ENCODE measurements at regions of chr7 and their contacts with region 1.

Region 1: GRCh38 chr7:107879400-107880035 is 11.5 kb upstream of the DLD start:
- DNase-seq: peak; percentile 57
- H3K4me3 Mint-ChIP-seq: no peak overlapping the region
- H3K27ac Mint-ChIP-seq: no peak overlapping the region
- H3K4me1 Mint-ChIP-seq: peaks cover 13% of the 10 kb centered on the region
- H3K27me3 Mint-ChIP-seq: peaks cover 4% of the 10 kb centered on the region

Region 2: DNA sequence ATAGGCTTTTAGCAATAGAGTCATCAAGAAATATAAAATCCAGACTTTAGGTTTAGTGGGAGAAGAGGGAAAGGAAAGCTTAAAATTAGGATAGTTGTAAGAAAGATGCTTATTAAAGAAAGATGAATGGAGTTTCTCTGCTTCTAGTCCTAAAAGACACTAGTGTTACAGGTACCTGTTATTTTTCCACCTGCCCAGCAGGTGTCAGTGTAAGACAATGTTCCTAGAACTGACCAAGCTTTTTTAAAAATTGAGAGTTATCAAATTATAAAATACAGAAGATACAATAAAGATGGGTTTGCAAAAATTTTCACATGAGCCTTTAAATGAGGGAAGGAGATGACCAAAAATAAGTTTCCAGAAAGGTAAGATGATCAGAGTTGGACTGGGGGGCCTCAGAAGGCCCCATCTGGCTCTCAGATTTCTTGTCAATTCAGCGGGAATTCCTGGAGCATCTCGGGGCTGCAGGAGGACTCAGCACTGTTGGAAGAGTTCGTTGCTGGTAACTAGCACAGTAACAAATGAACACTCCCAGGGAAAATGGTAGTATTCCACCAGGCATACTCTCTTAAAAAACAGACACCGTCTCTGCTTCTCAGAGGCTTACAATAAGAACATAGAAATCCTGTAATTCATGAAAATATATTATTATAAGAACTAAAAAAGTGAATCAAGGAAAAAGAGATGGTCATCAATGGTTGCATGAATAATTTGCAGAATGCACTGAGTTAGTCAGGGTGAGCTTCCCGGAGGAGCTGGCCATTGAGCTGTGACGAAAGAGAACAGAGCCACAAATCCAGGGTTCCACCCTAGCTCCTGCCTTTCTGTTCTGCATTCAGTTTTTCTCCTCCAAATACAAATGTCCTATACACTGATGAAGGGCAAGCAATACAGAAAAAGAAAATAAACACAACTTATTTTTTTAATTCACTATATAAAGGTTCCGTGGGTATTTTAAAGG is 1086.2 kb before region 1 on chr7:
- CTCF ChIA-PET with region 1: no interaction called
- intact Hi-C with region 1: loop called (anchors 2 kb)
- DNase-seq: peak; percentile 54
- H3K4me3 Mint-ChIP-seq: no peak overlapping the region
- H3K27ac Mint-ChIP-seq: no peak overlapping the region
- H3K4me1 Mint-ChIP-seq: no peaks in the 10 kb centered on the region
- H3K27me3 Mint-ChIP-seq: no peaks in the 10 kb centered on the region

Region 3: DNA sequence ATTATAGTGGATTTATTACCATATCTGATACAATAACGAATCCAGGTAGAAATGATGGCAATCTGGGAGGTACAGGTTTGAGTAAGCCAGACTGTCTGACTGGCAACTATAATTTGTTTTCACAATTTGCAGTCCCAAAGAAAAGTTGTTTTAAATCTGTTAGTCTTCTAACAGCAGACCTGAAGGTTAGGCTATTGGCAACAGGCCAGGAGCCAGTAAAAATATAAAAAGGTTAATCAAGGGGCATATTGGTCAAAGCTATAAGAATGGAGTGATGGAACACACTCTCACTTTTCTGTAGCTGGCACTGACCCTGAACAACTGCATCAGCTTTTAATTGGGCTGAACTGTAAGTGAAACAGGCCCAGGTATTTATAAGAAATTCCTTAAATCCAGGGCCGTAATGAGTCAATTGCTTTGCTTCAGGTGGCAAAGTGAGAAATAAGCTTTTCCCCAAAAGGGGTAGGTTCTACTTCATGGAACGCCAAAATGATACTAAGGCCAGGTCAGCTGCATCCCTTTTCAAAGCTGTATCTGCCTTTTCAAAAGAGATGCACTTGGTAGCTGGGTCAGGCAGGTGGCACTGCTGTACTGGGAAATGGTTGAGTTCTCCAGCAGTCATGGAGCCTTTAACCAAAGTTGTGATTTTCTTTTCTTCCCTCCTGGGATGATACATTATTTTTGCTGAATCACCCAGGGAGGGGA is 416.6 kb before region 1 on chr7:
- CTCF ChIA-PET with region 1: interaction called, 3 read pairs
- intact Hi-C with region 1: loop called (anchors 1 kb)
- DNase-seq: peak; percentile 64
- H3K4me3 Mint-ChIP-seq: no peak overlapping the region
- H3K27ac Mint-ChIP-seq: no peak overlapping the region
- H3K4me1 Mint-ChIP-seq: no peaks in the 10 kb centered on the region
- H3K27me3 Mint-ChIP-seq: no peaks in the 10 kb centered on the region

Region 4: DNA sequence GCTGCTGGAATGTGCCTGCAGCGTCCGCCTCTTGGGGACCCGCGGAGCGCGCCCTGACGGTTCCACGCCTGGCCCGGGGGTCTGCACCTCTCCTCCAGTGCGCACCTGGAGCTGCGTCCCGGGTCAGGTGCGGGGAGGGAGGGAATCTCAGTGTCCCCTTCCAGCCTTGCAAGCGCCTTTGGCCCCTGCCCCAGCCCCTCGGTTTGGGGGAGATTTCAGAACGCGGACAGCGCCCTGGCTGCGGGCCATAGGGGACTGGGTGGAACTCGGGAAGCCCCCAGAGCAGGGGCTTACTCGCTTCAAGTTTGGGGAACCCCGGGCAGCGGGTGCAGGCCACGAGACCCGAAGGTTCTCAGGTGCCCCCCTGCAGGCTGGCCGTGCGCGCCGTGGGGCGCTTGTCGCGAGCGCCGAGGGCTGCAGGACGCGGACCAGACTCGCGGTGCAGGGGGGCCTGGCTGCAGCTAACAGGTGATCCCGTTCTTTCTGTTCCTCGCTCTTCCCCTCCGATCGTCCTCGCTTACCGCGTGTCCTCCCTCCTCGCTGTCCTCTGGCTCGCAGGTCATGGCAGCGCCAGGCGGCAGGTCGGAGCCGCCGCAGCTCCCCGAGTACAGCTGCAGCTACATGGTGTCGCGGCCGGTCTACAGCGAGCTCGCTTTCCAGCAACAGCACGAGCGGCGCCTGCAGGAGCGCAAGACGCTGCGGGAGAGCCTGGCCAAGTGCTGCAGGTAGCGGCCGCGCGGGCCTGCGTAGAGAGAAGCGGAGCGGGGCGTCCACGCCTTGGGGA is 218.2 kb before region 1 on chr7:
- CTCF ChIA-PET with region 1: no interaction called
- intact Hi-C with region 1: loop called (anchors 2 kb)
- DNase-seq: peak; percentile 69
- H3K4me3 Mint-ChIP-seq: peak overlapping the region; percentile 86
- H3K27ac Mint-ChIP-seq: no peak overlapping the region
- H3K4me1 Mint-ChIP-seq: peaks cover 26% of the 10 kb centered on the region
- H3K27me3 Mint-ChIP-seq: peaks cover 31% of the 10 kb centered on the region

Region 5: DNA sequence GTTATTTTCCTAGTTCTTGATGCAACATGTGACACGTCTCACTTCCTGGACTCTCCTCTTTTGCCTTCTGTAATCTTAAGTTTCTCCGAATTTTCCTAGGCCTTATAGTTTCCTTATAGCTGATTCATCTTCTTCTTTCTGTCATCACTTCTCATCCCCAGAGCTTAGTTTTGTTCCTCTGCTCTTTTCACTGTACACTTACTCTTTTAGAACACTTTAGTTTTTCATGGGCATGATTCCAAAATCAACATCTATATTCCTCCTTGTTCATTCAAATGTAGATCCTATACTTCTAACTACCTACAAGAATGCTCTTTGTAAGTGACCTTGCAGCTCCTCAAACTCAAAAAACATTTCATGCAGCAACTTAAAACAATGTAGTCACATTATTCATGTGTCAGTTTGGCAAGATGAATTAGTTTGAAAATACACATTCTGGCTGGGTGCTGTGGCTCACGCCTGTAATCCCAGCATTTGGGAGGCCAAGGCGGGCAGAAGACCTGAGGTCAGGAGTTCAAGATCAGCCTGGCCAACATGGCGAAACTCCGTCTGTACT is 63.4 kb before region 1 on chr7:
- CTCF ChIA-PET with region 1: interaction called, 8 read pairs
- intact Hi-C with region 1: loop called (anchors 2 kb)
- DNase-seq: no peak
- H3K4me3 Mint-ChIP-seq: no peak overlapping the region
- H3K27ac Mint-ChIP-seq: peak overlapping the region; percentile 1
- H3K4me1 Mint-ChIP-seq: peaks cover 32% of the 10 kb centered on the region
- H3K27me3 Mint-ChIP-seq: peaks cover 2% of the 10 kb centered on the region

Region 6: GRCh38 chr7:107890962-107891635 is 11.6 kb after region 1 on chr7 and contains the start of gene DLD:
- CTCF ChIA-PET with region 1: interaction called, 46 read pairs
- intact Hi-C with region 1: loop called (anchors 1 kb)
- DNase-seq: peak; percentile 96
- H3K4me3 Mint-ChIP-seq: peak within 1 kb of the TSS; percentile 100
- H3K27ac Mint-ChIP-seq: peak within 1 kb of the TSS; percentile 98
- H3K4me1 Mint-ChIP-seq: peaks cover 37% of the 10 kb centered on the region
- H3K27me3 Mint-ChIP-seq: no peaks in the 10 kb centered on the region
- total RNA-seq, gene DLD: 92.6 to 96.8 TPM